Activated T-helper 1 cell treated with anti-CD3 and anti-CD28 coated beads, Interleukin-12 subunit alpha, Interleukin-12 subunit beta, Interleukin-2, Interleukin-4 antibody, amounts not matched to agents 30 ng/mL and 10 ng/mL and 1 ng/mL, durations not matched to agents 14 hours and 24 hours and 36 hours (primary cell): ENCODE measurements at regions of chr7 and their contacts with region 1.

Region 1: DNA sequence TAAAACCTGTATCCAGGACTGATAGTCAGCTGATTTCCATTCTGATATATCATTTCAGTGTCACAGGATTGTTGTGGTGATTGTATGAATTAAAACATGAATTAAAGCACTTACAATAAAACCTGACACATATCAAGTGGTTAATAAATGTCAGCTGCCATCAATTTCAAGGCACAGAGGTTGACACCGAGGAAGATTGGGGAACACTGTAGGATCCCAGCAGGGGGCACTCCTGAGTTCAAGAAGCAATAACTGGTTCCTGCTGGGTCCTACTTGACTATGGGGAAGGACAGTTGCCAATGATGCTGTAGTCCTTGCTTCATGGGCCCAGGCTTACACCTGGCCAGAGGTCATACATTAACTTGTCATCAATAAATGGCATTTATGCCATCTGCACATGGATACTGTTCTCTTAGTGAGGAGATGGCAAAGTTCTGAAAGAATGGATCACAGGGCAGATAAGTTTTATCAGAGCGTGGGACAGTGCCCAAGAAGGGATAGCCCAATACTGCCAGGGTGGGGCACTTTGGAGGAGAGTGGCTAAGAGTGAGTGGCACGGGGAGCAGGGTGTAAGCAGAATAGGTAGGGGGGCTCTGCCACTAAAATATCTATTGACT is 24.1 kb downstream of the FZD1 start:
- DNase-seq: no peak
- H3K4me3 Mint-ChIP-seq: no peak overlapping the region
- H3K27ac Mint-ChIP-seq: no peak overlapping the region
- H3K4me1 Mint-ChIP-seq: no peaks in the 10 kb centered on the region
- H3K27me3 Mint-ChIP-seq: no peaks in the 10 kb centered on the region

Region 2: GRCh38 chr7:91636129-91636724 is 347.9 kb after region 1 on chr7:
- intact Hi-C with region 1: loop called (anchors 10 kb)
- DNase-seq: no peak
- H3K4me3 Mint-ChIP-seq: no peak overlapping the region
- H3K27ac Mint-ChIP-seq: no peak overlapping the region
- H3K4me1 Mint-ChIP-seq: no peaks in the 10 kb centered on the region
- H3K27me3 Mint-ChIP-seq: no peaks in the 10 kb centered on the region